Activated CD4-positive, alpha-beta memory T cell treated with anti-CD3 and anti-CD28 coated beads for 36 hours (primary cell): ENCODE measurements at regions of chr10 and their contacts with region 1.

Region 1: DNA sequence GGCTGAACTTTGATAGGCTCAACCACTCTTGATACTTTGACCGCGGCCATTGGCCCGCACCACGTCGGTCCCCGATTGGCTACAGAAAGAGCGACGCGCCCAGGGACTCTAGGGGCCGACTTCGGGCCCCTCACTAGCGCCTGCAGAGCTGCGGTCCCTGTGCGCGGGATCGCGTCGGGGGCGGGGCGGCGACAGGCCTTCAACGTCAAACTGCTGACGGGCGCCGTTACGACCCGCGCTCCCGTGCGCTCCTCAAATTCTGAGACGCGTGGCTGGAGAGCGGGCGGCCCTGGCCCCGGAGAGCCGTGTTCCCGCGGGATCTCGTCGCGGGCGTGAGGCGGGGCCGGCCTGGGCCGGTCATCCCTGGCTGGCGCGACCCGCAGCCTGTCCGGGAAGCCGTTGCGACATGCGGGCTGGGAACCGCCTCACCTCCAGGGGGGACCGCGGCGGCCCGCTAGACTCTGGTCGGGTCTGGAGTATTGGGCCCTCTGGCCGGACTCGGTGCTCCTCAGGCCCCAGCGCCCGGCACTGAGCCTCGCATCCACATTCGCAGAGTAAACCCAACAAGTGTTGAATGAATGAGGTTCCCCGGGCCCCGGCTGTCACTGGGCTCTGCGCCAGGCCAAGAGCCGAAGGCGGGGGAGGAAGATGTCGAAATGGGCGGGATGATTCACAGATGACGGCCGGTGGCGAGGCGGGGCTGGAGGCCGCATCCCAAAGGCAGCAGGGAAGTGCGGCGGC is 644 bp upstream of the SLC25A28 start:
- DNase-seq: peak; percentile 95
- H3K4me3 Mint-ChIP-seq: peak overlapping the region; percentile 80
- H3K27ac Mint-ChIP-seq: peak overlapping the region; percentile 96
- H3K4me1 Mint-ChIP-seq: peaks cover 37% of the 10 kb centered on the region
- H3K27me3 Mint-ChIP-seq: no peaks in the 10 kb centered on the region

Region 2: GRCh38 chr10:99430451-99431189 is 190.3 kb before region 1 on chr10 and contains the start of gene GOT1:
- CTCF ChIA-PET with region 1: interaction called, 106 read pairs
- POLR2A ChIA-PET with region 1: interaction called, 24 read pairs
- intact Hi-C with region 1: loop called (anchors 1 kb)
- DNase-seq: peak; percentile 98
- H3K4me3 Mint-ChIP-seq: peak within 1 kb of the TSS; percentile 99
- H3K27ac Mint-ChIP-seq: peak within 1 kb of the TSS; percentile 90
- H3K4me1 Mint-ChIP-seq: peaks cover 32% of the 10 kb centered on the region
- H3K27me3 Mint-ChIP-seq: no peaks in the 10 kb centered on the region
- total RNA-seq, gene GOT1: 51.6 to 54.9 TPM

Region 3: DNA sequence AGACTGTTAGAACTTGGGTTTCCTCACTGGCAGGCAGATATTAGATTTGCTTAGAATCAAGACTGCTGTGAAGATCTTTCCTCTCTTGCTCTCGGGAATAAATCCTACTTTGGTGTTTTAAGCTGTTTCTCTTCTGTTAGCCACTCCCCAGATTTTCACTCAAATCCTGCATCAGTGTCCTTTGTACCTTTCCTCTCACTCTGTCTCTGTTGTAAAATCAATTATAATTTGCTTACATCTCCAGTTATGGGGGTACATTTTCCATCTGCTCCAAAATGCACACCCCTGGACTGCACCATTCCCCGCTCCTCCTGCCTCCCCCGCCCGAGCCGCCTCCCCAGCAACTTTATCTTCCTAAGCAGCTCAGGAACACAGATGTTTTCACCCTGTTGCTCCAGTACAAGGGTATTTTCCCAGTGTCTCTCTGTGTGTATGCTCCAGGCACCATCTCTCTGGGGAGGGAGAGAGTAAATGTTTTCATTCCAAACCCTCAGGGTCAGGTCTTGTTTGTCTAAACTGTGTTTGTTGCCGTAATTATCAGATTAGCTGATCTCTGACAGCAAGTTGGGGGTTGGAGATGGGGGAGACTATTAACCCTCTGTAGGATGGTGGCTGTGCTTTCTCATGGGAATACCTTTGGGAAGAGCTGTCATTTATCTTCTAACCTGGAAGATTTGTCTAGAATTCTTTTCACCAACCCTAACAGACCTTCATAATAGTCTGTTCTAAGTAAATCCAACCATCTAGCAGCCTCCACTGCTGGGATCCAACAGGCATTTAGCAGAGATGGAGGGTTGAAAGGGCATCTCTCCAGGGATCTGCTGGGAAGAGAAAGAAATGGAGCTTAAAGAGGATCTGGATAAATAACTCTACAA is 170.0 kb before region 1 on chr10:
- CTCF ChIA-PET with region 1: no interaction called
- POLR2A ChIA-PET with region 1: no interaction called
- intact Hi-C with region 1: no loop called
- DNase-seq: no peak
- H3K4me3 Mint-ChIP-seq: no peak overlapping the region
- H3K27ac Mint-ChIP-seq: no peak overlapping the region
- H3K4me1 Mint-ChIP-seq: no peaks in the 10 kb centered on the region
- H3K27me3 Mint-ChIP-seq: peaks cover 15% of the 10 kb centered on the region

Region 4: DNA sequence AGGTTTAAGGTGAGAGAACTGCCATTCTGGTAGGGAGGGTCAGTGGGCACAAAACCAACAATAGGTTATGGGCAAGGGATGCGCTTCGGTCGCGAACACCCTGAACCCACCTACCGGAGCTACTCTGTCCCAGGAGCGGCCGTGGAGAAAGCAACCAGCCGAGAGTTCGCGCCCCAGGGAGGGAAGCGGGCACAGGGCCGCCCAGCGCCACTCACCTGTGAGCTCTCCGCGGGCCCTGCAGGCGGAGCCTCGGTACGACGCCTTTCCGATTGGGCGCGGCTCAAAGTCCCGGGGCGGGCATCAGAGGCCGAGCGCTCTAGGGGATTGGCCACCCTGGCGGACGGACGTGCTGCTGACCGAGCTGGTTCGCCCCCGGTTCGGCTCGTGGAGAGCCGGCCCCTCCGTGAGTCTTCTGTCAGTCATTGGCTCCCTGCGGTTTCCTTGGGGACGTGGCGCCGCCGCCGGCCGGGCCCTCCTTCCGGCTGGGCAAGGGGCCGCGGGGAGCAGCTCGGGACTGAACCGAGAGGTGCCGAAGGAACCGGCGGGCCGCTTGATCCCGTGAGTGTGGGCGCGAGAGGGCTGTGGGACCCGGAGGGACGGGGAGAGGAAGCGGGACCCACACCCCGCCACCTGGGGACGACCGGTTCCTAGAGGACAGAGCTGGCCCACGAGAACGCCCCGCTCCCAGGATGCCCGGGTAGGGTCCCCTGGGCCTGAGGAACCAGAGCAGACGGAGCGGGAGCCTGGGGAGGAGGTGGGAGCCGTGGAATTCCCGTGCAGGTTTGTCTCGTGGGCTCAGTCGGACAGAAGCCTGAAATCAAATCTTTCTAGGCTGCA is 38.4 kb after region 1 on chr10 and contains the start of gene ENTPD7:
- CTCF ChIA-PET with region 1: interaction called, 8 read pairs
- POLR2A ChIA-PET with region 1: interaction called, 55 read pairs
- intact Hi-C with region 1: loop called (anchors 1 kb)
- DNase-seq: peak; percentile 96
- H3K4me3 Mint-ChIP-seq: peak within 1 kb of the TSS; percentile 83
- H3K27ac Mint-ChIP-seq: peak within 1 kb of the TSS; percentile 84
- H3K4me1 Mint-ChIP-seq: peaks cover 18% of the 10 kb centered on the region
- H3K27me3 Mint-ChIP-seq: peaks cover 18% of the 10 kb centered on the region
- total RNA-seq, gene ENTPD7: 3.0 to 3.3 TPM

Region 5: GRCh38 chr10:99732033-99732912 is 111.4 kb after region 1 on chr10 and contains the starts of genes COX15 and CUTC:
- CTCF ChIA-PET with region 1: interaction called, 3 read pairs
- POLR2A ChIA-PET with region 1: interaction called, 20 read pairs
- intact Hi-C with region 1: loop called (anchors 1 kb)
- DNase-seq: peak; percentile 97
- H3K4me3 Mint-ChIP-seq: peak within 1 kb of the TSS; percentile 100
- H3K27ac Mint-ChIP-seq: peak within 1 kb of the TSS; percentile 100
- H3K4me1 Mint-ChIP-seq: peaks cover 29% of the 10 kb centered on the region
- H3K27me3 Mint-ChIP-seq: no peaks in the 10 kb centered on the region
- total RNA-seq, gene COX15: 31.3 to 31.5 TPM
- total RNA-seq, gene CUTC: 26.0 to 26.6 TPM

Region 6: GRCh38 chr10:99742701-99743100 is 121.8 kb after region 1 on chr10:
- CTCF ChIA-PET with region 1: no interaction called
- POLR2A ChIA-PET with region 1: no interaction called
- intact Hi-C with region 1: no loop called
- DNase-seq: no peak
- H3K4me3 Mint-ChIP-seq: no peak overlapping the region
- H3K27ac Mint-ChIP-seq: no peak overlapping the region
- H3K4me1 Mint-ChIP-seq: peaks cover 16% of the 10 kb centered on the region
- H3K27me3 Mint-ChIP-seq: no peaks in the 10 kb centered on the region

Region 7: DNA sequence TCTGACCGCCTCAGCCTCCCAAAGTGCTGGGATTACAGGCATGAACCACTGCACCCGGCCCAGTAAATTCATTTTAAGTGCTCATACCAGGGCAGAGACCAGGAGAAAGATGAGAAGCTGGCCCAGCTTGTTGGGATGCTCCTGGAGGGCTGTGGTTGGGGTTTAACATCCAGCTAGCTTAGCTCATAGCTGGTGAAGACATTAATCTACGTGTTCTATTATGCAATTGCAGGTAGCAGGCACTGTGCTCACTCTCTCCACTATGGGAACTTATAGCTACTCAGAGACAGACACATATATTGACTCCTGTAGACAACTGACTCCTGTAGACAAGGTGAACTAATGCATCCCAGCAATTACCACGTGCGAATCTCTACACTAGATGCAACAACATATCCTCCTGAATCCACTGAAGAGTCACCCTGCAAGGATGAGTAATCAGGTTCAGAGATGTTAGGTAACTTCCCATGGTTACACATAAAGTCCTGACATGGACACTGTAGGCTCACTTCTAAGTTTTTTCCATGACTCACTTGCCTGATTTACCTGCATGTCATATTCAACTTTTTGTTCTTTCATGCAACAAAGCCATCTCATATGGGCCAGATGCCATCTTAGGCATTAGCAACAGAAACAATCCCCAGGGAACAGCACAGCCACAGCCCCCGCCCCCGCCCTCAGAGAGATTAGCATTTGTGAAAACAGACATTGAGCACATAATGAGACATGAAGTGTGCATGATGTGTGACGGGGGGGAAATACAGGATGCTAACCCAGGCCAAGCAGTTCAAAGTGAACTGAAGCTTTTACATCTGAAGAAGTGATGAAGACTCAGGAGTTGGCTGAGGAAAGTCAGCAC is 527.7 kb after region 1 on chr10:
- CTCF ChIA-PET with region 1: no interaction called
- POLR2A ChIA-PET with region 1: no interaction called
- intact Hi-C with region 1: loop called (anchors 1 kb)
- DNase-seq: peak; percentile 78
- H3K4me3 Mint-ChIP-seq: no peak overlapping the region
- H3K27ac Mint-ChIP-seq: peak overlapping the region; percentile 76
- H3K4me1 Mint-ChIP-seq: peaks cover 28% of the 10 kb centered on the region
- H3K27me3 Mint-ChIP-seq: peaks cover 3% of the 10 kb centered on the region